Posterior cingulate gyrus (tissue), 11 donors: ENCODE measurements at regions of chr1 and their contacts with region 1.

Region 1: GRCh38 chr1:154183045-154183915 is 8.6 kb downstream of the TPM3 start:
- DNase-seq: peak; percentile 93 to 99 (median 97)

Region 2: DNA sequence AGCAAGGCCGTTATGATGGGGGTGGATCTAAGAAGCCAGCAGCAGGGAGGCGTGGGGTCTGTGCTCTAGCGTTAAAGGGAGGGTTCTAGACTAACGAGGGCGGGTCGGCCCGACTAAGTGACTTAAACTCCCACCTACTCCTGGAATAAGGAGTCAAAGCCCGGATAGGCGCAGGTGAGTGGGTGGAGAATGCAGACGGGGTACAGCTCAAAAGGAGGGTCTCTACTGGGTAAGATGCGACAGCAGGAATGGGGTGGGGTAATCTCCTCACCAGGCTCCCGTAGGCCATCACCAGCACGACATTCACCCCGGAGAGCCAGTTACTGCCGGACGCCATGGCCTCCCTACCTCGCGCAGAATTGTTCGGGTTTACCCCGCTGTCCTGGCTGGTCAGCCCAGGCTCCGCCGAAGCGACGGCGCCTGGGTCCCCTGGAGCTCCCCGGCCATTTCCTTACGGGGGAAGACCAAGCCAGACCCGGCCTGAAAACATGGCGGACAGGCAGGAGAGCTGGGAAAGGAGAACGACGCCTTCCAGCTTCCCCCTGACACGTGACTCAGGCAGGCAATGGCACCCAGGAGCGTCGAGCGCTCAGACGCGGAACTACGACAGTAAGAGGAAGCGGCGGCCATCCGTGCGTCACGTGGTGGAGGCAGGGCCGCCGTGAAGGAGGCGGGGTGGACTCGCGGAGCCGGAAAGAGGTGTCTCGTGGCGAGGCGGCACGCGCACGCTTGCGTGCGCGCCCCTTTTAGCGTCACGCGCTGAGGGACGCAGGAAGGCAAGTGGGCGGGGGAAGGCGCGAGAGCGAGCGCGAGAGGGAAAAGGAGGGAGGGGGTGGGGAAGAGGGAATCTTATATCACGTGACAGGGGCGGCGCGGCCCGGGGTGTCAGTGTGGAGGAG is 37.0 kb after region 1 on chr1 and contains the start of gene UBAP2L:
- intact Hi-C with region 1: loop called (anchors 2 kb)
- DNase-seq: peak; percentile 98 to 100 (median 98)